ENCODE measurements at regions of chr1 and their contacts with region 1.

Region 1: DNA sequence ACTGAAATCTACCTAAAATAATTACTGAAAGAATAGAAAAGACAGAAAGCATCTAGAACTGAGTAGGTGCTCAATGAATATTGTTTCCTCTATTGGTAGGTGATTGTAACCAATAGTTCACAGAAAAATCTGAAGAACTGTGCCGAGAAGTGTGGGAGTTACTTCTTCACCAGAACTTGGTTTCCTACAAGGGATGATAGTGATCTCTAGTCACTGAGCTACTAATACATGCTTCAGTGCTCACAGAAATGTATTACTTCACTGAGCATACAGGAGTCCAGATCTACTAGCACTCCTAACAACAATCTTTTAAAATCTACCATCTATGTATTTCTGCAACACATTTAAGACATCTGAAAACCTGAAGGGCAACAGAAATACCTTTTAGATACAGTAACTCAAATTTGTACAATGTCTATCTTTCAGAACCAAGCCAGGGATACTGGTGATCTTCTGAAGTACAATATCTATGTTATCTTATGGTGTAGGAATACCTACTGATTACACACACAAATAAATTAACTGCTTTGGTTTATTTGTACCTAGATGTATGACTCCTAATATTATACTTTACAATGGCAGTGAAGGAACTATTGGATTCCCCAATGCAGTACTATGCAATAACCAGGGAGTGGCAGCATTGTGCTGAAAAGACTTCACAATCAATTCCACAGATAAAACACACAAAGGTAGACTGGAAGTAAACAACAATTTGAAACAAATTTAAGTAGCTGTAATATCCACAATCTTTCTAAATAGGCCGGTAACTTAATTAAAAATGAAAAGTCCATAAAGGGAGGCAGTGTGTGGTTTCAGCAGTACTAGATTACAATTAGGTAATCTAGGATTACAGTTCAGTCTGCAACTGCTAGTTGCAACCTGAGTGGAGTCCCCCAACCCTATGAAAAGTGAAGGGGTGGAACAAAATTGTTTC is 243.0 kb downstream of the SLC45A1 start:
- DNase-seq: peak; percentile 48
- ATAC-seq: peak; percentile 28
- H3K4me3 Mint-ChIP-seq: no peak overlapping the region
- H3K27ac Mint-ChIP-seq: no peak overlapping the region
- H3K4me1 Mint-ChIP-seq: peaks cover 16% of the 10 kb centered on the region
- H3K27me3 Mint-ChIP-seq: no peaks in the 10 kb centered on the region

Region 2: GRCh38 chr1:8503842-8504241 is 57.0 kb before region 1 on chr1:
- CTCF ChIA-PET with region 1: no interaction called
- POLR2A ChIA-PET with region 1: no interaction called
- DNase-seq: no peak
- ATAC-seq: no peak
- H3K4me3 Mint-ChIP-seq: no peak overlapping the region
- H3K27ac Mint-ChIP-seq: no peak overlapping the region
- H3K4me1 Mint-ChIP-seq: no peaks in the 10 kb centered on the region
- H3K27me3 Mint-ChIP-seq: no peaks in the 10 kb centered on the region

Region 3: DNA sequence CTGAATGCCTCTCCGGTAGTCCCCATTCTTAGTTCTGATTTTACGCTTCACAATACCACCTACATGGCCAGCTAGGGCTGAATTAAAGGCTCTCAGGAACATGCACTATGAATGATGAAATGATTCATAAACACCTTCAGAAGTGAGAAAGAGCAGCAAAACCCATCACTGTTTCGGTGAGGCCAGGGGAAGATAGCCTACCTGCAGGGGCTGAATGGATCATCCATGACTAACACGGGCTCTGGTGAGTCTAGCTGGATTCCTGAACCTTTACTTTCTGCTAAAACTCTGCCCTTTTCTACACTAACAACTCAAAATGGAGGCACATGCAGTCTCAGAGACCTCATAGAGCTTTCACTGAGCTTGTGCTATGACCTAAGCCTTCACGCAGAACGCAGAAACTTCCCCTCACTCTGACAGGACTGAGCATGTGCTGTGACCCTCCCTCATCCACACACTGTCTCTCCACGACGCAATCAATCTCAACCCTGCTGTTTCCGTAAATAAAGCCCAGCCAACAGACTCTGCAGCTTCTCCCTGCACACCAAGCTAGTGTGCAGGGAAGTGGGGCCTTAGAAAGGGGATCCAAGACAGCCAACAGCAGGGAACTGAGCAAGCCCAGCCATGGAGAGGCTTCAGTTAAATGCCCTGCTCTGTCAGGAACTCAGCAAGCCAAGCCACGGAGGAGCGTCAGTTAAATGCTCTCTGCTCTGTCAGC is 35.2 kb before region 1 on chr1:
- CTCF ChIA-PET with region 1: interaction called, 12 read pairs
- POLR2A ChIA-PET with region 1: no interaction called
- DNase-seq: peak; percentile 65
- ATAC-seq: peak; percentile 80
- H3K4me3 Mint-ChIP-seq: no peak overlapping the region
- H3K27ac Mint-ChIP-seq: no peak overlapping the region
- H3K4me1 Mint-ChIP-seq: peaks cover 8% of the 10 kb centered on the region
- H3K27me3 Mint-ChIP-seq: no peaks in the 10 kb centered on the region

Region 4: GRCh38 chr1:8571200-8571984 is 10.5 kb after region 1 on chr1:
- CTCF ChIA-PET with region 1: interaction called, 17 read pairs
- POLR2A ChIA-PET with region 1: no interaction called
- DNase-seq: no peak
- ATAC-seq: no peak
- H3K4me3 Mint-ChIP-seq: no peak overlapping the region
- H3K27ac Mint-ChIP-seq: no peak overlapping the region
- H3K4me1 Mint-ChIP-seq: no peaks in the 10 kb centered on the region
- H3K27me3 Mint-ChIP-seq: no peaks in the 10 kb centered on the region

Region 5: GRCh38 chr1:8649027-8649426 is 88.1 kb after region 1 on chr1:
- CTCF ChIA-PET with region 1: interaction called, 10 read pairs
- POLR2A ChIA-PET with region 1: interaction called, 4 read pairs
- DNase-seq: no peak
- ATAC-seq: peak; percentile 28
- H3K4me3 Mint-ChIP-seq: no peak overlapping the region
- H3K27ac Mint-ChIP-seq: no peak overlapping the region
- H3K4me1 Mint-ChIP-seq: peaks cover 54% of the 10 kb centered on the region
- H3K27me3 Mint-ChIP-seq: no peaks in the 10 kb centered on the region

Region 6: DNA sequence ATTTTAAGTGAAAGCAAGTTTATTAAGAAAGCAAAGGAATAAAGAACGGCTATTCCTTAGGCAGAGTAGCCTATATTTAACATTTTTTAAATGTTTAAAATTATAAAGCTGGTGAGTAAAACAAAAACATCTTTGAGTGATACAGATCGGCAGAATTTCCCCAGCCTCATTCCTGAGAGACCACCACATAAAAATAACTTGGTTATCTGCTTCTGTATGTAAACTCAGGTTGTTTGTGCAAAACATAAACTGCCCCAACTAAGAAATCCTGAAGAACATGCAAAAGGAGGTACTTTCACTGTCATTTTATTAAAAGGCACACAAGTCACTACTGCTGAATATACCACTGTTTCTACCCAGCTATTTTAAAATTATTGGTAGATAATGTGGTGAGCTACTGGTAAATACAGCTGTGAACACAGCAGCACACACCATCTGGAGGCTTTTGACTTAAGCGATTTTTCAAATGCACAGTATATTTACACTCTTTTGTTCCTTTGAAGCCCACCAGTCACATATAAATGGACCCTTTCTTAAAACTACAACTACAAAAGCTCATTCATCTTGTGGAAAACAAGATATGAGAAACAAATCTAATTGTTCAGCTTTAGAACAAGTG is 137.2 kb after region 1 on chr1:
- CTCF ChIA-PET with region 1: interaction called, 11 read pairs
- POLR2A ChIA-PET with region 1: no interaction called
- DNase-seq: no peak
- ATAC-seq: no peak
- H3K4me3 Mint-ChIP-seq: no peak overlapping the region
- H3K27ac Mint-ChIP-seq: no peak overlapping the region
- H3K4me1 Mint-ChIP-seq: peaks cover 35% of the 10 kb centered on the region
- H3K27me3 Mint-ChIP-seq: no peaks in the 10 kb centered on the region

Measured in activated CD8-positive, alpha-beta T cell treated with anti-CD3 and anti-CD28 coated beads, Interleukin-2, amount 10 ng/mL, durations not matched to agents 7 days and 5 days (primary cell).